ENCODE measurements at regions of chr1 and their contacts with region 1.

Region 1: DNA sequence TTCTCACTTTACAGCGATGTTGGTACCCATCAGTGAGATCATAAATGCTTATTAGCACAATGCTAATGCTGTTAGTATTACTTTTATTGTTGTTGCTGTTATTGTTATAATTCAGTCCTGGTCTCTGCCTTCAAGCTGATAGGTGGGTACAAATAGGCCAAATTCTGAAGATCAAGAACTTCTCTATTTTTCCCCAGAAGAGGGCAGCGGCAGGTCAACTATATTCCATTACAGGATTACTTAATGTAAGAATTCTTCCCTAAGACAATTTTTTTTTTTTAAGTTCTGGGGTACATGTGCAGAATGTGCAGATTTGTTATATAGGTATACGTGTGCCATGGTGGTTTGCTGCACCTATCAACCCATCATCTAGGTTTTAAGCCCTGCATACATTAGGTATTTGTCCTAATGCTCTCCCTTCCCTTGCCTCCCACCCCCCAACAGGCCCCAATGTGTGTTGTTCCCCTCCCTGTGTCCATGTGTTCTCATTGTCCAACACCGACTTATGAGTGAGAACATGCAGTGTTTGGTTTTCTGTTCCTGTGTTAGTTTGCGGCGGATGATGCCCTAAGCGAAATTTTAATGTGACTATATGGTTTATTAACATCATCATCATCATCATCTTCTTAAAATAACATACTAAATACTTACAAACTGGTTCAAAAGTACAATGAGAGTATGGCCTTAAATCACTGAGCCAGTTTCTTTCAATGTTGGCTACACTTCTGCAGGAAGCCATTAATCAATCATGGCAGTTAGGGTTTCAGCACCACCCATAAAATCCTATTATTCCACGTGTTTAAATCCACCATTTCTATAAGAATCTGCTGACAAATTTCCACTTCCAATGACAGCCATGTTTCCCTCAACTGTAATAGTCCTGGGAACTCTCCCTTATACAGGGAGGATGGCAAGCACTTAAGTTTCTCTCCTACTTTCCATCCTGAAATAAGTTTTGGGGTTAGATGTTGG is 19.2 kb downstream of the SLC19A2 start:
- DNase-seq: no peak
- ATAC-seq: peak; percentile 58
- H3K4me3 ChIP-seq: no peak overlapping the region
- H3K27ac ChIP-seq: no peak overlapping the region
- H3K4me1 ChIP-seq: no peaks in the 10 kb centered on the region
- H3K27me3 ChIP-seq: no peaks in the 10 kb centered on the region
- CTCF ChIP-seq: peak; percentile 46

Region 2: GRCh38 chr1:169259816-169260215 is 206.7 kb before region 1 on chr1:
- intact Hi-C with region 1: no loop called
- DNase-seq: no peak
- ATAC-seq: peak; percentile 66
- H3K4me3 ChIP-seq: no peak overlapping the region
- H3K27ac ChIP-seq: no peak overlapping the region
- H3K4me1 ChIP-seq: no peaks in the 10 kb centered on the region
- H3K27me3 ChIP-seq: no peaks in the 10 kb centered on the region
- CTCF ChIP-seq: no peak

Region 3: GRCh38 chr1:169546087-169546995 is 79.8 kb after region 1 on chr1:
- intact Hi-C with region 1: loop called (anchors 10 kb)
- DNase-seq: no peak
- ATAC-seq: peak; percentile 96
- H3K4me3 ChIP-seq: no peak overlapping the region
- H3K27ac ChIP-seq: no peak overlapping the region
- H3K4me1 ChIP-seq: no peaks in the 10 kb centered on the region
- H3K27me3 ChIP-seq: no peaks in the 10 kb centered on the region
- CTCF ChIP-seq: peak; percentile 80

Region 4: DNA sequence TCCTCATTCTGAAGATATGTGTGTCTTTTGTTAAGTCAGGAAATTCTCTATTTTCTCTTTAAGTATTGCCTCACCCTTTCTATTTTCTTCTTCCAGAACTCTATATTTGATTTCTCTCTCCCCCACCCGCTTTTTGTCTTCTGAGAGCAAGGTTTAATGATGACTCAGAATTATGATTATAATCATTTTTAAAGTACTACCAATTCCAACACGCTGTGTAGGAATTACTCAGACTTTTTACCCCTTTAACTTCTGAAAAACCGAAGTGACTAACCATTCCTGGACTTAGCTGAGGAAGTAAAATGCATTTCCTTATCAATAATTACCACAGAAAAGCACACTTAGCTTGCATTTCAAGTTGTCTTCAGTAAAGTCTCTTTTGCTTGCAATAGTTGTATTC is 448.0 kb after region 1 on chr1:
- intact Hi-C with region 1: no loop called
- DNase-seq: no peak
- ATAC-seq: no peak
- H3K4me3 ChIP-seq: no peak overlapping the region
- H3K27ac ChIP-seq: no peak overlapping the region
- H3K4me1 ChIP-seq: no peaks in the 10 kb centered on the region
- H3K27me3 ChIP-seq: no peaks in the 10 kb centered on the region
- CTCF ChIP-seq: no peak